ENCODE measurements at regions of chr15 and their contacts with region 1.

Region 1: GRCh38 chr15:85330901-85331588 is 49.4 kb upstream of the AKAP13 start:
- DNase-seq: peak; percentile 92
- H3K4me3 Mint-ChIP-seq: peak overlapping the region; percentile 88
- H3K27ac Mint-ChIP-seq: peak overlapping the region; percentile 98
- H3K4me1 Mint-ChIP-seq: peaks cover 47% of the 10 kb centered on the region
- H3K27me3 Mint-ChIP-seq: no peaks in the 10 kb centered on the region

Region 2: DNA sequence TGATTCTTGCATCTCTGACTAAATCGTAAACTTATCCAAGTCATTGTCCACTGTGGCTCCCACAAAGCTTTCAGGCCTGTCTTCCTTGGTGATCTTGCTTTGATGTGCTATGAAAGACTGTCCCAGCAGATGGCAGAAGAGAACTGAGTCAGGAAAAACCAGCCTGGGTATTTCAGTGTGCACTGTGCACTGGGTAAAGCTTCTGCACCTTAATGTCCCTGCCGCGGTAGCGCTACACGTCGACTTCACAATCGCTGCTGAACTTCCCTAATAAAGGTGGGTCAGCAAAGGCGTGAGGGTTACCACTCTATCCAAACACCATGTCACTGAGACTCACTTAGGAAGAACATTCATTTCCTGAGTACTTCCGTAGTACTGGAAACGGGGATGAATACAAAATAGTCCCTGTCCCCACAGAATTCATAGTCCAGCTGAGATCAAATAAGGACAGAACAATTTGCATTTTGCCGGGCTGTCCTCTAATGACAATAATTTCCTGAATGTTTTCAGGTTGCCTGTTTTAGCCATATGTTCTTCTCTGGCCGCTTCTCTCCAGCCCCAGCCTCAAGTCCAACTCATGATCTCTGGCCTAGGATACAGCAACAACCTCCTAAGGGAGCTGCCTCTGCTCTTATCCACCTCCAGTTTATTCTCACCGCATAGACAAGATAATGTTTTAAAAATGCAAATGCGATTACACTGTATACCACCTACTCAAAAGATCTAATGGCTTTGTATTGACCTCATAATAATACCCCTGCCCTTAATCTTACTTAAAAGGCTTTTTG is 34.2 kb before region 1 on chr15:
- CTCF ChIA-PET with region 1: interaction called, 22 read pairs
- POLR2A ChIA-PET with region 1: interaction called, 12 read pairs
- DNase-seq: peak; percentile 75
- H3K4me3 Mint-ChIP-seq: peak overlapping the region; percentile 3
- H3K27ac Mint-ChIP-seq: no peak overlapping the region
- H3K4me1 Mint-ChIP-seq: peaks cover 20% of the 10 kb centered on the region
- H3K27me3 Mint-ChIP-seq: peaks cover 1% of the 10 kb centered on the region

Region 3: GRCh38 chr15:85312486-85312885 is 18.6 kb before region 1 on chr15:
- CTCF ChIA-PET with region 1: interaction called, 86 read pairs
- POLR2A ChIA-PET with region 1: interaction called, 132 read pairs
- DNase-seq: no peak
- H3K4me3 Mint-ChIP-seq: no peak overlapping the region
- H3K27ac Mint-ChIP-seq: no peak overlapping the region
- H3K4me1 Mint-ChIP-seq: peaks cover 58% of the 10 kb centered on the region
- H3K27me3 Mint-ChIP-seq: no peaks in the 10 kb centered on the region

Region 4: GRCh38 chr15:85318048-85318731 is 12.9 kb before region 1 on chr15:
- CTCF ChIA-PET with region 1: interaction called, 86 read pairs
- POLR2A ChIA-PET with region 1: interaction called, 132 read pairs
- DNase-seq: peak; percentile 58
- H3K4me3 Mint-ChIP-seq: peak overlapping the region; percentile 3
- H3K27ac Mint-ChIP-seq: peak overlapping the region; percentile 82
- H3K4me1 Mint-ChIP-seq: peaks cover 57% of the 10 kb centered on the region
- H3K27me3 Mint-ChIP-seq: no peaks in the 10 kb centered on the region

Region 5: GRCh38 chr15:85354461-85354860 is 23.4 kb after region 1 on chr15:
- CTCF ChIA-PET with region 1: interaction called, 5 read pairs
- POLR2A ChIA-PET with region 1: interaction called, 12 read pairs
- DNase-seq: no peak
- H3K4me3 Mint-ChIP-seq: no peak overlapping the region
- H3K27ac Mint-ChIP-seq: no peak overlapping the region
- H3K4me1 Mint-ChIP-seq: peaks cover 24% of the 10 kb centered on the region
- H3K27me3 Mint-ChIP-seq: peaks cover 2% of the 10 kb centered on the region

Region 6: DNA sequence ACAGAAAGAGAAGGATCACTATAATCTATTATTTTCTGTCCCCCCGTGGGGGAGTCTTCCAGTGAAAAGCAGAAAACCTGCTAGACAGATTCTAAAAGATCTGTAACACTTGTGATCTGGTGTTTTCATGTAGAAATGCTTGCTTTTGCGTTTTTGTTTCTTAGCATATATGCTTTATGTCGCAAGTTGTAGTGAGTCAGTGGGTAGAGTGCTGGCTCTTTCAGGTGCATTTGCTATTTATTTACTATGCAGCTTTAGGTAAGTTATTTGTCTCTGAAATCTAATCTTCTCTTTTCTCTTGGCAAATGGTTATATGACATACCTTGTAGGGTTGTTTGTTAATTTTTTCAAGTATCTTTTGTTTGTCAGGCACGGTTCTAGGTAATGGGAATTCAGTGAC is 58.7 kb after region 1 on chr15:
- CTCF ChIA-PET with region 1: no interaction called
- POLR2A ChIA-PET with region 1: no interaction called
- DNase-seq: no peak
- H3K4me3 Mint-ChIP-seq: no peak overlapping the region
- H3K27ac Mint-ChIP-seq: no peak overlapping the region
- H3K4me1 Mint-ChIP-seq: peaks cover 28% of the 10 kb centered on the region
- H3K27me3 Mint-ChIP-seq: no peaks in the 10 kb centered on the region

Region 7: GRCh38 chr15:85407804-85408746 is 77.0 kb after region 1 on chr15:
- CTCF ChIA-PET with region 1: interaction called, 74 read pairs
- POLR2A ChIA-PET with region 1: interaction called, 42 read pairs
- DNase-seq: peak; percentile 50
- H3K4me3 Mint-ChIP-seq: peak overlapping the region; percentile 40
- H3K27ac Mint-ChIP-seq: peak overlapping the region; percentile 80
- H3K4me1 Mint-ChIP-seq: peaks cover 76% of the 10 kb centered on the region
- H3K27me3 Mint-ChIP-seq: no peaks in the 10 kb centered on the region

Region 8: DNA sequence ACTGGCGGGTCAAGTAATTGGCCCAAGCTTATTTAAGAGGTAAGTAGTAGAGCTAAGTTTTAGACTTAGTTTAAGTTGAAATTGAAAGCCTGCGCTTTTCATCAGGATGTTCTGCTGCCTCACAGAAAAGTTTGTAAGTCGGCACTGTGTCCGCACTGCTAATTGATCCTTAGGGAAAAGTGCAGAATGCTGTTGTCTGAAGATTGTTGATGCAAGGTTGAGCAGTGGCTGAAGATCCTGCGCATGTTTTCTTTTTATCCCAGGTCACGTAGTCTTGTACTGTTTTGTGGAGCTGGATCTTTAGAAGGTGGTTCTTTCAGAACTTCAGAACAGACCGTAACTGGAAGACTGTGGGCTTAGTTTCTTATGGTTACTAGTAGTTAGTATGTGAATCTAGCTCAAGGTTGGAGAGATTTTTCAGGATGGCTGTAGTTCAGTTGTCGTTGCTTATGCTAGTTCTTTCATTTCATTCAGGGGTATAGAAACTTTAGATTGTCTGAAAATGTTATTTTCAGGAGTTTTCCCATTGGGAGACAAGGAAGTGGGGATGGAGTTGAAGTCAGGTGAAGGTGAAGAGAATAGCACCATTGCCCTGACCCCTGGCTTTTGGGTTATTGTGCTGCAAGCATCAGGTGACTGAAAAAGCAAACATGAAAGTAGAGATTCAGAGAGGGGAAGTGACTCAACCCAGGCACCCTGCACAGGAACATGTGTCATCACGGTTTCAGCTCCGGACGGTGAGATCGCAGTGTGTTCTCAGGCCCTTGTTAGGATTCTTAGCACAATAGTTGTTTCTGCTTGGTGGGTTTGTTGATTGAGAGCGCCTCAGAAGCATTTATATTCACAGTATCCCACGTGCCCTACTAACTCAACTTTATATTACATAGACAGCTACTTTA is 82.2 kb after region 1 on chr15:
- CTCF ChIA-PET with region 1: interaction called, 74 read pairs
- POLR2A ChIA-PET with region 1: interaction called, 42 read pairs
- DNase-seq: peak; percentile 84
- H3K4me3 Mint-ChIP-seq: peak overlapping the region; percentile 53
- H3K27ac Mint-ChIP-seq: peak overlapping the region; percentile 86
- H3K4me1 Mint-ChIP-seq: peaks cover 67% of the 10 kb centered on the region
- H3K27me3 Mint-ChIP-seq: no peaks in the 10 kb centered on the region

Region 9: GRCh38 chr15:85597155-85597815 is 266.2 kb after region 1 on chr15:
- CTCF ChIA-PET with region 1: no interaction called
- POLR2A ChIA-PET with region 1: no interaction called
- DNase-seq: peak; percentile 33
- H3K4me3 Mint-ChIP-seq: no peak overlapping the region
- H3K27ac Mint-ChIP-seq: peak overlapping the region; percentile 67
- H3K4me1 Mint-ChIP-seq: peaks cover 43% of the 10 kb centered on the region
- H3K27me3 Mint-ChIP-seq: no peaks in the 10 kb centered on the region

Measured in activated CD4-positive, alpha-beta memory T cell treated with anti-CD3 and anti-CD28 coated beads, Interleukin-2, amount 10 ng/mL, durations not matched to agents 7 days and 5 days (primary cell).